Activated naive CD4-positive, alpha-beta T cell treated with anti-CD3 and anti-CD28 coated beads for 36 hours (primary cell): ENCODE measurements at regions of chr1 and their contacts with region 1.

Region 1: GRCh38 chr1:116570358-116571200 is at the start of gene CD58:
- DNase-seq: peak; percentile 80
- H3K4me3 Mint-ChIP-seq: peak within 1 kb of the TSS; percentile 81
- H3K27ac Mint-ChIP-seq: peak within 1 kb of the TSS; percentile 38
- H3K4me1 Mint-ChIP-seq: peaks cover 39% of the 10 kb centered on the region
- H3K27me3 Mint-ChIP-seq: peaks cover 7% of the 10 kb centered on the region
- total RNA-seq, gene CD58: 3.9 to 4.2 TPM

Region 2: DNA sequence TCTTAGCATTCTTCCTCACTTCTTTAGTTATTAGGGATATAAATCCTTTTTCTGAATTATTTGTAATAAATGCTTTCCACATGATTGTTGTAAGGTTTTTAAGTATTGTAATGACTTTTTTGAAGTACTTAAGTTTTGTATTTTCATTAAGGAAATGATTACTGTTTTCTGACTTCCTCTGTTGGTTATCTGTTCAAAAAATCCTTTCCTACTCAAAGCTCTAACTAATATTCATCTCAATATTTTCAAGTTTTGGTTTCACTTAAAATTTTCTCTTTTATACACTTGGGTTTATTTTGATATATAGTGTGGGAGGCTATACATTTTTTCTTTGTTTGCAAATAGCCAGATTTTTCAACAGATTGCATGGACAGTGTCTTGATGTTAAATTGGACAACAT is 669.7 kb before region 1 on chr1:
- CTCF ChIA-PET with region 1: no interaction called
- intact Hi-C with region 1: no loop called
- DNase-seq: no peak
- H3K4me3 Mint-ChIP-seq: no peak overlapping the region
- H3K27ac Mint-ChIP-seq: no peak overlapping the region
- H3K4me1 Mint-ChIP-seq: no peaks in the 10 kb centered on the region
- H3K27me3 Mint-ChIP-seq: peaks cover 11% of the 10 kb centered on the region

Region 3: GRCh38 chr1:116465845-116466685 is 104.5 kb before region 1 on chr1:
- CTCF ChIA-PET with region 1: no interaction called
- intact Hi-C with region 1: no loop called
- DNase-seq: no peak
- H3K4me3 Mint-ChIP-seq: no peak overlapping the region
- H3K27ac Mint-ChIP-seq: no peak overlapping the region
- H3K4me1 Mint-ChIP-seq: no peaks in the 10 kb centered on the region
- H3K27me3 Mint-ChIP-seq: peaks cover 2% of the 10 kb centered on the region

Region 4: DNA sequence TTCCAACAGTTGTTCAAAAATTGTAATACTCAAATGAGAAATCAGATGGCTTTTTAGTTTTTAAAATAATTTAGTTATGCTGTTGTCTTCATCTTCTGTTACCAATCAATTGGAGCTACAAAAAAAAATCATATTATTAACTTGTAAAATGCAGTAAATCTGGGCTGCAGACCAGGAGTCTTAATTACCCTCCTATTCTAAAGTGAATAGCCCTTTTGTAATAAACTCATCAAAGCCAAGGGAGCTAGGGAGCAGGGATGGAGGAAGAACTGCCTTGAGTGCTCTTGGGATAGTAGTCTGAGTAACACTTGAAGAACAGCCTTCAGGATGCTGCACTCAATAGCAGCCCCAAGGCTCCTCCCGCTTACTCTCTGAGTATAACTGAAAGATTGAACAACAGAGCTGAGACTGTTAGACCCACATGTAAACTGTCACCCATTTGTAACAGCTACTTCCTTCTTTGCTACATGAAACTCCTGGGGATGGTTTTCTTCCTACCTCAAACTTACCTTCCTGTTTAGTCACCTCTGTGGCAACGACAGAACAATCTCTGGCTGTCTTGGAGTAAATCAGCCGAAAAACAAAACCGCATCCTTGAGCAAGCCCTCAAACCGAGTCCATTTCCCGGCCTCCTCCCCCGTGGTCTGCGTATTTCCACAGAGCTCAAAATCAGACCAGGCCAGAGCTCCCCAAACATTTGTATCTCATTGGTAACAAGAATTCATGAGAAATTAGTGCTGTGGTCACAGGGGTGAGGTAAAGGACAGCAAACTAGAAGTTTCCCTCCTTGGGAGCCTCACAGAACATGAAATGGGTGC is 55.7 kb before region 1 on chr1:
- CTCF ChIA-PET with region 1: interaction called, 5 read pairs
- intact Hi-C with region 1: loop called (anchors 1 kb)
- DNase-seq: peak; percentile 73
- H3K4me3 Mint-ChIP-seq: no peak overlapping the region
- H3K27ac Mint-ChIP-seq: peak overlapping the region; percentile 76
- H3K4me1 Mint-ChIP-seq: peaks cover 33% of the 10 kb centered on the region
- H3K27me3 Mint-ChIP-seq: no peaks in the 10 kb centered on the region

Region 5: DNA sequence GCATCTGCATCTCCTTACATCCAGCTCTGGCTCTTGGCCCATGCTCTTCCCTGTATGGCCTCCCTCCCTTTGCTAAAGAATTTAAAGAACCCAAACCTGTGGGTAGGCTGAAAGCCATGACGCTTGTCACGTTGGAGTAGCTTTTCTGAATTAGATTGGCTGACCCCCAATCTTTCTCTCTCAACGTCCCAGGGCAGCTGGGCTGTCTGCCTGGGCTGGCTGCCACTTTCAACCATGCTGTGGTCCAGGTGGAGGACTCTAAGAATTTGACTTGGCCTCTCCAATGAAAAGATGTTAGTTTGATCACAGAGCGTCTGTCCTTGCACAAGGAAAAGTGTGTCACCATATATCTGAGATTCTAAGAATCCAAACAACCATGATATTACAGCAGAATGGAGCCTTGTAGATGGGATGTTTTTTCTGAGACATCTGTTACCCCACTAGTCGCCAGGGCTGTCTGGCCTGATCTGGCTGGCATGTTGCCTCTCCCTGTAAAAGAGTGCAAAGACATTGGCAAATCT is 103.5 kb after region 1 on chr1:
- CTCF ChIA-PET with region 1: interaction called, 17 read pairs
- intact Hi-C with region 1: loop called (anchors 1 kb)
- DNase-seq: no peak
- H3K4me3 Mint-ChIP-seq: no peak overlapping the region
- H3K27ac Mint-ChIP-seq: no peak overlapping the region
- H3K4me1 Mint-ChIP-seq: no peaks in the 10 kb centered on the region
- H3K27me3 Mint-ChIP-seq: peaks cover 18% of the 10 kb centered on the region

Region 6: GRCh38 chr1:116881879-116882520 is 311.4 kb after region 1 on chr1:
- CTCF ChIA-PET with region 1: interaction called, 8 read pairs
- intact Hi-C with region 1: loop called (anchors 2 kb)
- DNase-seq: peak; percentile 77
- H3K4me3 Mint-ChIP-seq: no peak overlapping the region
- H3K27ac Mint-ChIP-seq: no peak overlapping the region
- H3K4me1 Mint-ChIP-seq: peaks cover 12% of the 10 kb centered on the region
- H3K27me3 Mint-ChIP-seq: no peaks in the 10 kb centered on the region

Region 7: GRCh38 chr1:116962987-116963639 is 392.5 kb after region 1 on chr1:
- CTCF ChIA-PET with region 1: no interaction called
- intact Hi-C with region 1: no loop called
- DNase-seq: no peak
- H3K4me3 Mint-ChIP-seq: no peak overlapping the region
- H3K27ac Mint-ChIP-seq: no peak overlapping the region
- H3K4me1 Mint-ChIP-seq: no peaks in the 10 kb centered on the region
- H3K27me3 Mint-ChIP-seq: no peaks in the 10 kb centered on the region

Region 8: DNA sequence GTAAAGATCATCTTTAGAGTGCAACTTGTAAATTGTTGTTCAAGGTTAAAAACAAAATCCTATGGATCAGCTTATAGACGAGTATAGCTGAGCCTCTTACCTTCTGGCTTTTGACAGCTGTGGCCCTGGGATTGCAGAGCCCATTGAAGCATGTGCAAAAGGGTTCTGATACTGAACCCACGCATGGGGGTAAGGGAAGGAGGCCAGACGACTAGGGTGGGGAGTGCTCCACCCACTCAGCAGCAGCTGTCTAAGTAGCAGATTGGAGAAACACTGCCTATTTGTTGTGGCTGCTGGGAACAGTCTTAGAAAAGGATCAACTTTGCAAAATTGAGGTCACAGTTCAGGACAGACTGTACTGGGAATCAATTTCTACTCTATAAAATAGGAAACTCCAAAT is 447.1 kb after region 1 on chr1:
- CTCF ChIA-PET with region 1: no interaction called
- intact Hi-C with region 1: no loop called
- DNase-seq: no peak
- H3K4me3 Mint-ChIP-seq: no peak overlapping the region
- H3K27ac Mint-ChIP-seq: no peak overlapping the region
- H3K4me1 Mint-ChIP-seq: peaks cover 32% of the 10 kb centered on the region
- H3K27me3 Mint-ChIP-seq: no peaks in the 10 kb centered on the region

Region 9: GRCh38 chr1:117051224-117052064 is 480.9 kb after region 1 on chr1:
- CTCF ChIA-PET with region 1: interaction called, 12 read pairs
- intact Hi-C with region 1: loop called (anchors 1 kb)
- DNase-seq: peak; percentile 69
- H3K4me3 Mint-ChIP-seq: peak overlapping the region; percentile 45
- H3K27ac Mint-ChIP-seq: peak overlapping the region; percentile 28
- H3K4me1 Mint-ChIP-seq: peaks cover 61% of the 10 kb centered on the region
- H3K27me3 Mint-ChIP-seq: no peaks in the 10 kb centered on the region